HepG2 (cell line): ENCODE measurements at regions of chr4 and their contacts with region 1.

Region 1: DNA sequence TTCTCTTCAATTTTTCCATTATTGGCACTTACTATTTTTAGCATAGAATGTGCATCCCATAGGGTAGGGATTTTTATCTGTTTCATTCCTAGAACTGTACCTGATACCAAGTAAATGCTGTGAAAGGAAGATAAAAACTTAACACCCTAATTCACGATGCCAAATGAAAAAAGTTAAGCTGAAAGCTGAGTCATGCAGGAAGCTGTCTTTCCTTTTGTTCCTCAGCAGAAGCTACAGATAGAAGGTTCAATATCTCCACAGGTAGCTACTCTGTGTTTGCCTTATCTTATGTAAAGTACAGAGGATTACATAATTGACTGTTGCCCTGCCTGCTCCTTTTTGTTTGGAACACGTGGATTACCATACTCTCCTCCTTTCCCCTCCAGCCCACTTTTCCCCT is 77.0 kb downstream of the LRP2BP start:
- DNase-seq: peak; percentile 81
- ATAC-seq: peak; percentile 78
- H3K4me3 ChIP-seq: no peak overlapping the region
- H3K27ac ChIP-seq: peak overlapping the region; percentile 70
- H3K4me1 ChIP-seq: peaks cover 9% of the 10 kb centered on the region
- H3K27me3 ChIP-seq: no peaks in the 10 kb centered on the region; a peak in 1 of 5 replicates
- CTCF ChIP-seq: no peak
- EP300 ChIP-seq: peak in 1 of 2 experiments; percentile 74; a peak in 2 of 4 replicates
- POLR2A ChIP-seq: no peak
- RAD21 ChIP-seq: no peak

Region 2: GRCh38 chr4:185332575-185333464 is 14.1 kb after region 1 on chr4:
- CTCF ChIA-PET with region 1: no interaction called
- POLR2A ChIA-PET with region 1: no interaction called
- in situ Hi-C with region 1: no loop called
- intact Hi-C with region 1: loop called (anchors 2 kb)
- DNase-seq: peak; percentile 92
- ATAC-seq: peak; percentile 92
- H3K4me3 ChIP-seq: no peak overlapping the region
- H3K27ac ChIP-seq: peak overlapping the region; percentile 62
- H3K4me1 ChIP-seq: peaks cover 45% of the 10 kb centered on the region
- H3K27me3 ChIP-seq: no peaks in the 10 kb centered on the region
- CTCF ChIP-seq: no peak
- EP300 ChIP-seq: peak in 1 of 2 experiments; percentile 82; a peak in 2 of 4 replicates
- POLR2A ChIP-seq: no peak
- RAD21 ChIP-seq: no peak